Heart left ventricle (tissue), 16 donors: ENCODE measurements at regions of chr7 and their contacts with region 1.

Region 1: DNA sequence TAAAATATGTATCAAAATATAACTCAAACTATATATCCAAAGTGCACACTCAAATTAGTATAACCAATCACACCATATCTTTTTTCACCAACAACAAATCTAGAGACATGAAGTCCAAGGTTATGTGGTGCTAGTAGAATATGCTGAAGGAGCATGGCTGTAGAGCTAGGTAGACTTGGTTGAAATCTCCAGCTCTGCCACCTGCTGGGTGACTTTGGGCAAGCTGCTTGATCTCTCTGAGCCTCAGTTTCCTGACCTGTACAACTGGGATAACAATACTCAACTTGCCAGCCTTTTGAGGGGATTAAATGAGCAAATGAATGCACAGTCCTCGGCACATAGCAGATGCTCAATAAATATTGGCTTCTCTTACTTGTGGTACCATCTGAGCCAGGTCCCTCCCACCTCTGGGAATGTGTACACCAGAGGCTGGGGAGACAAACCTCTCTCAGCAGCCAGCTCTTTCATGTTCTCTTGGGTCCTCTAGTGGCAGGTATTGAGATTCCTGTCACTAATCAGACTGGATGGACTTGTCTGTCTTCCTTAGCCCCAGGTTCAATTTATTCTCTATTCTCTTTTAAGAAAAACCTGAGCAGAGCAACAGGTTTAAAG is 94.2 kb upstream of the PDE1C start:
- DNase-seq: peak in 4 of 5 donors; percentile 35 to 63 (median 48)
- ATAC-seq: peak; percentile 71 to 80 (median 75)
- H3K4me3 ChIP-seq: no peak overlapping the region
- H3K27ac ChIP-seq: peak overlapping the region in 8 of 12 donors; percentile 57 to 90 (median 82)
- H3K4me1 ChIP-seq: peaks cover 0 to 33% (median 25%) of the 10 kb centered on the region in 12 donors
- H3K27me3 ChIP-seq: no peaks in the 10 kb centered on the region
- CTCF ChIP-seq: peak; percentile 14 to 65 (median 53)
- POLR2A ChIP-seq: no peak

Region 2: GRCh38 chr7:31336202-31337001 is 828.0 kb before region 1 on chr7:
- intact Hi-C with region 1: no loop called
- DNase-seq: no peak
- ATAC-seq: peak in 2 of 4 donors; percentile 22 to 31
- H3K4me3 ChIP-seq: peak overlapping the region in 7 of 12 donors; percentile 5 to 40 (median 22)
- H3K27ac ChIP-seq: peak overlapping the region in 1 of 12 donors; percentile 18
- H3K4me1 ChIP-seq: peaks cover 0 to 12% (median 0%) of the 10 kb centered on the region in 12 donors
- H3K27me3 ChIP-seq: peaks cover 5 to 69% (median 34%) of the 10 kb centered on the region in 9 donors
- CTCF ChIP-seq: peak in 2 of 12 donors; percentile 11 to 12
- POLR2A ChIP-seq: no peak

Region 3: DNA sequence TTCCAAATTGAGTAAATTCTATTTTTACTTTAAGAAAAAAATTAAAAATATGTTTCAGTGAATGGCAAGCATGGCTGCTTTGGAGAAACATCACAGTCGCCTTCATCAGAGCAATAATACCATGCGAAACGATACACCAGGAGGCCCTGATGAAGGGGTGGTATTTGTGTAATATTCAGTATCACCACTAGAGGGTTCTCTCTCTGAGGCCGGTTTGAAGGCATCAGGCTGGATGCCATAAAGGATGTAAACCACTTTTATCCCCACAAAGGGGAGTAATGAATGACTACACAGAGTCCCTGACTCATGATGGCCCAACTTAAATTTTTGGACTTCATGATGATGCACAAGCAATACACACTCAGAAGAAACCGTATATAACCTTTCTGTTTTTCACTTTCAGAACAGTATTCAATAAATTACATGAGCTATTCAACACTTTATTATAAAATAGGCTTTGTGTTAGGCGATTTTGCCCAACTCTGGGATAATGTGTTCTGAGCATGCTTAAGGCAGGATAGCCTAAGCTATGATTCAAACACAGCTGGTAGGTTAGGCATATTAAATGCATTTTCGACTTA is 382.0 kb before region 1 on chr7:
- intact Hi-C with region 1: loop called in 2 of 10 experiments (anchors 5 to 10 kb)
- DNase-seq: no peak
- ATAC-seq: peak in 3 of 4 donors; percentile 54 to 66 (median 61)
- H3K4me3 ChIP-seq: no peak overlapping the region
- H3K27ac ChIP-seq: no peak overlapping the region
- H3K4me1 ChIP-seq: peaks cover 0 to 11% (median 0%) of the 10 kb centered on the region in 12 donors
- H3K27me3 ChIP-seq: no peaks in the 10 kb centered on the region
- CTCF ChIP-seq: peak; percentile 63 to 86 (median 74)
- POLR2A ChIP-seq: no peak

Region 4: GRCh38 chr7:31875424-31875823 is 289.0 kb before region 1 on chr7:
- intact Hi-C with region 1: loop called in 5 of 10 experiments (anchors 5 to 10 kb)
- DNase-seq: peak in 2 of 5 donors; percentile 36 to 46
- ATAC-seq: peak; percentile 29 to 79 (median 74)
- H3K4me3 ChIP-seq: no peak overlapping the region
- H3K27ac ChIP-seq: peak overlapping the region in 11 of 12 donors; percentile 9 to 82 (median 62)
- H3K4me1 ChIP-seq: peaks cover 5 to 28% (median 18%) of the 10 kb centered on the region in 12 donors
- H3K27me3 ChIP-seq: no peaks in the 10 kb centered on the region
- CTCF ChIP-seq: no peak
- POLR2A ChIP-seq: no peak

Region 5: GRCh38 chr7:31883761-31884164 is 280.7 kb before region 1 on chr7:
- intact Hi-C with region 1: loop called in 5 of 10 experiments (anchors 5 to 10 kb)
- DNase-seq: peak in 2 of 5 donors; percentile 37
- ATAC-seq: peak; percentile 19 to 69 (median 59)
- H3K4me3 ChIP-seq: no peak overlapping the region
- H3K27ac ChIP-seq: peak overlapping the region; percentile 67 to 87 (median 82)
- H3K4me1 ChIP-seq: peaks cover 12 to 59% (median 27%) of the 10 kb centered on the region in 12 donors
- H3K27me3 ChIP-seq: no peaks in the 10 kb centered on the region
- CTCF ChIP-seq: no peak
- POLR2A ChIP-seq: no peak

Region 6: GRCh38 chr7:32070406-32071360 is 93.8 kb before region 1 on chr7 and contains the start of gene PDE1C:
- intact Hi-C with region 1: loop called in 7 of 10 experiments (anchors 2 to 10 kb)
- DNase-seq: peak; percentile 78 to 90 (median 81)
- ATAC-seq: peak; percentile 62 to 91 (median 82)
- H3K4me3 ChIP-seq: peak within 1 kb of the TSS; percentile 42 to 80 (median 64)
- H3K27ac ChIP-seq: peak within 1 kb of the TSS; percentile 78 to 97 (median 92)
- H3K4me1 ChIP-seq: peaks cover 0 to 42% (median 8%) of the 10 kb centered on the region in 12 donors
- H3K27me3 ChIP-seq: peaks cover 0 to 23% (median 0%) of the 10 kb centered on the region in 9 donors
- CTCF ChIP-seq: no peak
- POLR2A ChIP-seq: peak in 1 of 2 donors; percentile 43
- total RNA-seq, gene PDE1C: 63.7 to 307 (median 143) TPM

Region 7: GRCh38 chr7:32093415-32094408 is 70.7 kb before region 1 on chr7:
- intact Hi-C with region 1: loop called in 2 of 10 experiments (anchors 5 kb)
- DNase-seq: peak in 4 of 5 donors; percentile 28 to 79 (median 63)
- ATAC-seq: peak; percentile 82 to 94 (median 86)
- H3K4me3 ChIP-seq: no peak overlapping the region
- H3K27ac ChIP-seq: peak overlapping the region in 10 of 12 donors; percentile 46 to 71 (median 64)
- H3K4me1 ChIP-seq: peaks cover 4 to 52% (median 23%) of the 10 kb centered on the region in 12 donors
- H3K27me3 ChIP-seq: no peaks in the 10 kb centered on the region
- CTCF ChIP-seq: no peak
- POLR2A ChIP-seq: no peak

Region 8: GRCh38 chr7:32357535-32358277 is 193.3 kb after region 1 on chr7:
- intact Hi-C with region 1: no loop called
- DNase-seq: no peak
- ATAC-seq: no peak
- H3K4me3 ChIP-seq: no peak overlapping the region
- H3K27ac ChIP-seq: no peak overlapping the region
- H3K4me1 ChIP-seq: peaks cover 0 to 5% (median 0%) of the 10 kb centered on the region in 12 donors
- H3K27me3 ChIP-seq: peaks cover 0 to 9% (median 0%) of the 10 kb centered on the region in 9 donors
- CTCF ChIP-seq: peak in 2 of 12 donors; percentile 16 to 25
- POLR2A ChIP-seq: no peak